ENCODE measurements at regions of chr2 and their contacts with region 1.

Region 1: DNA sequence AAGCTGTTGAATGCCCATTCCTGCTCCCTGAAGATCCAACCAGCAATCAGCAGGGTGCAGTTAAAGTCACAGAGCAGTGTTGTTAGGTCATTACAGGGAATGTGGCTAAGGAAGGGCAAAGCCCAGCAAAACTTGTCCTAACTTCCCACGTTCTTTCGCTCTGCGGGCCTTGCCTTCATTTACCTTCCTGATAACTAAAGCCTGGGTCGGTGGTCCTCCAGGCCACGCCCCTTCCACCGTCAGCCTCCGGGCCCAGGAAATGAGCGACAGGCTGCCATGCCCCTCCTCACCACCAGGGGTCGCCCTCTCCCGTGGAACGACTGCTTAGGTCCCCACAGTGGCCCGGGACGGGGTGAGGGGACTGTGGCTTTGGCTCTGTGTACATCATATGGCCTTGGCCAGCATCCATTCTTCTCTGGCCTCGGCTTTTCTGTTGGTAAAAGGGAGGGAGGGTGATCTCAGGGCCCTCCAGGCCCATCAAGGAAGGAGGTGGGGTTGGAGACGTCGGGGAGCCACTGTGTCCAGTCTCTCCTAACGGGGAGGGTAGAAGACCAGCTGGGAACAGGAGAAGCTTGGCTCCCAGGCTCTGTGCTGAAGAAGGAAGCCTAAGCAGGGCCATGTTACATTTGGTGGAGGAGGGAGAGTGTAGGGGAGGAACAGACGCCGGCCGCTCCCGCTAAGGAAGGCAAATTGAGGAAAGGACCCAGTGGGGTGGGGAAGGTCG is 2.2 kb downstream of the SH2D6 start:
- DNase-seq: peak; percentile 75 to 95 (median 90)
- ATAC-seq: peak; percentile 74
- H3K4me3 ChIP-seq: no peak overlapping the region
- H3K4me3 Mint-ChIP-seq: peak overlapping the region; percentile 69
- H3K27ac ChIP-seq: no peak overlapping the region
- H3K27ac Mint-ChIP-seq: peak overlapping the region; percentile 58
- H3K4me1 ChIP-seq: peaks cover 27% of the 10 kb centered on the region
- H3K4me1 Mint-ChIP-seq: peaks cover 18% of the 10 kb centered on the region
- H3K27me3 ChIP-seq: no peaks in the 10 kb centered on the region
- H3K27me3 Mint-ChIP-seq: no peaks in the 10 kb centered on the region
- CTCF ChIP-seq: peak; percentile 97

Region 2: GRCh38 chr2:85354286-85355072 is 66.2 kb before region 1 on chr2 and contains the starts of genes ELMOD3 and RETSAT:
- CTCF ChIA-PET with region 1: interaction called, 3 read pairs
- POLR2A ChIA-PET with region 1: no interaction called
- intact Hi-C with region 1: loop called (anchors 1 kb)
- DNase-seq: peak; percentile 92 to 99 (median 95)
- ATAC-seq: peak; percentile 98
- H3K4me3 ChIP-seq: peak within 1 kb of the TSS; percentile 85 to 94
- H3K4me3 Mint-ChIP-seq: peak within 1 kb of the TSS; percentile 100
- H3K27ac ChIP-seq: peak within 1 kb of the TSS; percentile 82 to 92
- H3K27ac Mint-ChIP-seq: peak within 1 kb of the TSS; percentile 100
- H3K4me1 ChIP-seq: peaks cover 31% of the 10 kb centered on the region
- H3K4me1 Mint-ChIP-seq: peaks cover 51% of the 10 kb centered on the region
- H3K27me3 ChIP-seq: no peaks in the 10 kb centered on the region
- H3K27me3 Mint-ChIP-seq: no peaks in the 10 kb centered on the region
- CTCF ChIP-seq: no peak
- total RNA-seq, gene ELMOD3: 10.8 to 12.1 TPM
- total RNA-seq, gene RETSAT: 19.0 to 19.6 TPM

Region 3: DNA sequence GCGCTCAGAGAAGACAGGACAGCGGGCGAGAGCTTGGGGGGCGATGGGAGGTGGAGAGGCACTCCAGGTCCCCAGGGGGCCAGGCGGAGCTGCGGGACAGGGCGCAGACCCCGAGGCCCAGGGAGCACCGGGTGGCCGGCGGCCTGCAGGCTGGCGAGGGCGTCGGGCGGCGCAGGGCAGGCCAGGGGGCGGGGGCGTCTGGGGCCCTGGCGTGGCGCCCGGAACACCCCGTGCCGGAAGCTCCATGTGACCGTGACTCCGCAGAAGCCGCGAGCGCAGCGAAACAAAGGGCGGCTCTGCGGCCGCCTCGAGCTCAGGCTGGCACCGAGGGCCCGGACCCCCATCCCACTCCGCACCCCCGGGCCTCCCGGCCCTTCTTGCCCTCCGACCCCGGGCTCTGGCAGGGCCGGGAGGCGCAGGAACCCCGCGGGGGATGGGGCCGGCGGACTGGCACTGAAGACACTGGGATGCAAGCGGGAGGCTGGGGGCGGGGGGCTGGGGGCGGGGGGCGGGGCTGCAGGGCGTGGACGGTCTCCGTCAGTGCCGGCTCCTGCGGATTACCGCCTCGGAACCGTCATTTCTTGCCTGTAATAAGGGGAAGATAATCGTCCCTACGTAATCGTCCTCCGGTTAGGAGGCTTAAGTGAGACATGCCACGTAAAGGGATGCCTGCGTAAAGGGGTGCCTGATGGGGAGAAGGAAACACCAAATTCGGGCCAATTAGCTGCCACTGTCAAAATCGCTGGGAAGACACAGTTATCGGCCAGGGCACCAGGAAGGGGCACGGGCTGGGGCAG is 17.0 kb after region 1 on chr2:
- CTCF ChIA-PET with region 1: interaction called, 15 read pairs
- POLR2A ChIA-PET with region 1: interaction called, 9 read pairs
- intact Hi-C with region 1: loop called in 1 of 2 experiments (anchors 1 kb)
- DNase-seq: peak; percentile 49 to 91 (median 75)
- ATAC-seq: peak; percentile 82
- H3K4me3 ChIP-seq: peak overlapping the region; percentile 46 to 60
- H3K4me3 Mint-ChIP-seq: peak overlapping the region; percentile 86
- H3K27ac ChIP-seq: peak overlapping the region; percentile 56 to 77
- H3K27ac Mint-ChIP-seq: peak overlapping the region; percentile 94
- H3K4me1 ChIP-seq: peaks cover 32% of the 10 kb centered on the region
- H3K4me1 Mint-ChIP-seq: peaks cover 23% of the 10 kb centered on the region
- H3K27me3 ChIP-seq: no peaks in the 10 kb centered on the region
- H3K27me3 Mint-ChIP-seq: no peaks in the 10 kb centered on the region
- CTCF ChIP-seq: no peak

Region 4: DNA sequence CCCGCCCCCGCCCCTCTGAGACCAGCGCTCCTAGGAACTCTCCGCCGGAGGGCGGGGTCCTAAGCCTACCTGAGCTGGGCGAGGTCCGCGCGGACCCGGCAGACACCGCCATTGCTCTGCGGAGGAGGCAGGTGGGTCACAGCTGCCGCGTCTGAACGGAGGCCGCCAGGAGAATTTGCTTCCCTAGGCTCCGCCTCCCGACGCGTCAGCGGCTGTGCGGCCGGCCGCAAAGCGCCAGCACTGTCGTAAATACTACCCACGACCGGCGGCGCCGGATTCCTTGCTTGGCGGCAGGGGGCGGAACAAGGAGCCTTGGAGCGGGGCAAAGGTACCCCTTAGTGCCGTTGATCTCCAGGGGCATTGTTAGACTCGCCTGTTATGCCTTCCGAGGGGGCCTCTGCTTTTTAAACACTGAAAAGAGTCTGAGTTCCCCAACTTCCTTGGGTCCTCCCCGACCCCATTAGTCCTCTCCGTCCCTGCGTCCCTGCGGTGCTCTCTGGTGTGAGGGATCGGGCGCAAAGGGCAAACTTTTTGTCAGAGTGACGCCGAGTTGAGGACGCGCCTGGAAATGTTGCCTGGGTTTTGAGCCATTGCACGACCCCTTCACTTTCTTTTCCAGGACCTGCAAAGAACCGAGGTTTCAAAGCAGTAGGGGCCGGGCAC is 140.8 kb after region 1 on chr2 and contains the start of gene GGCX:
- CTCF ChIA-PET with region 1: interaction called, 355 read pairs
- POLR2A ChIA-PET with region 1: interaction called, 3 read pairs
- intact Hi-C with region 1: loop called (anchors 1 to 2 kb)
- DNase-seq: peak; percentile 89 to 97 (median 96)
- ATAC-seq: peak; percentile 91
- H3K4me3 ChIP-seq: peak within 1 kb of the TSS; percentile 77 to 82
- H3K4me3 Mint-ChIP-seq: peak within 1 kb of the TSS; percentile 94
- H3K27ac ChIP-seq: peak within 1 kb of the TSS; percentile 72 to 73
- H3K27ac Mint-ChIP-seq: peak within 1 kb of the TSS; percentile 96
- H3K4me1 ChIP-seq: peaks cover 6% of the 10 kb centered on the region
- H3K4me1 Mint-ChIP-seq: peaks cover 21% of the 10 kb centered on the region
- H3K27me3 ChIP-seq: no peaks in the 10 kb centered on the region
- H3K27me3 Mint-ChIP-seq: no peaks in the 10 kb centered on the region
- CTCF ChIP-seq: no peak
- total RNA-seq, gene GGCX: 20.7 to 24.0 TPM

Region 5: DNA sequence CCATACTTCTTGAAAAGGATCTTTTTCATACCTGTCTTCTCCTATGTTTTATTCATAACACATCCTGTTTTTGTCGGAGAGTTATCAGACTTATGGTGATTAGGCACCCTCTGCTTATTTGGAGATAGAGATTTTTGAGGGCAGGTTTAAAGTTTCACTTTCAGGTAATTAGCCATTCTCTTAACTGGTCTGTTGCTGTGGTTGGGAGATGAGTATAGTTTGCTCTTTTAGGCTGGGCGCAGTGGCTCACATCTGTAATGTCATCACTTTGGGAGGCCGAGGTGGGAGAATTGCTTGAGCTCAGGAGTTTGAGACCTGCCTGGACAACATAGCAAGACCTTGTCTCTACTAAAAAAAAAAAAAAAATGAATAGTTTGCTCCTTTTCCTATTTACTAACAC is 222.0 kb after region 1 on chr2:
- CTCF ChIA-PET with region 1: interaction called, 10 read pairs
- POLR2A ChIA-PET with region 1: no interaction called
- intact Hi-C with region 1: no loop called
- DNase-seq: no peak
- ATAC-seq: no peak
- H3K4me3 ChIP-seq: no peak overlapping the region
- H3K4me3 Mint-ChIP-seq: no peak overlapping the region
- H3K27ac ChIP-seq: no peak overlapping the region
- H3K27ac Mint-ChIP-seq: no peak overlapping the region
- H3K4me1 ChIP-seq: no peaks in the 10 kb centered on the region
- H3K4me1 Mint-ChIP-seq: peaks cover 6% of the 10 kb centered on the region
- H3K27me3 ChIP-seq: no peaks in the 10 kb centered on the region
- H3K27me3 Mint-ChIP-seq: no peaks in the 10 kb centered on the region
- CTCF ChIP-seq: no peak

Region 6: GRCh38 chr2:86195055-86195807 is 774.5 kb after region 1 on chr2 and contains the start of gene IMMT:
- CTCF ChIA-PET with region 1: no interaction called
- POLR2A ChIA-PET with region 1: no interaction called
- intact Hi-C with region 1: loop called (anchors 5 to 10 kb)
- DNase-seq: peak; percentile 79 to 97 (median 93)
- ATAC-seq: peak; percentile 90
- H3K4me3 ChIP-seq: peak within 1 kb of the TSS; percentile 96 to 98
- H3K4me3 Mint-ChIP-seq: peak within 1 kb of the TSS; percentile 89
- H3K27ac ChIP-seq: peak within 1 kb of the TSS; percentile 91 to 98
- H3K27ac Mint-ChIP-seq: peak within 1 kb of the TSS; percentile 90
- H3K4me1 ChIP-seq: peaks cover 37% of the 10 kb centered on the region
- H3K4me1 Mint-ChIP-seq: peaks cover 63% of the 10 kb centered on the region
- H3K27me3 ChIP-seq: no peaks in the 10 kb centered on the region
- H3K27me3 Mint-ChIP-seq: no peaks in the 10 kb centered on the region
- CTCF ChIP-seq: no peak
- total RNA-seq, gene IMMT: 34.3 to 35.8 TPM